ENCODE measurements at regions of chr9 and their contacts with region 1.

Region 1: DNA sequence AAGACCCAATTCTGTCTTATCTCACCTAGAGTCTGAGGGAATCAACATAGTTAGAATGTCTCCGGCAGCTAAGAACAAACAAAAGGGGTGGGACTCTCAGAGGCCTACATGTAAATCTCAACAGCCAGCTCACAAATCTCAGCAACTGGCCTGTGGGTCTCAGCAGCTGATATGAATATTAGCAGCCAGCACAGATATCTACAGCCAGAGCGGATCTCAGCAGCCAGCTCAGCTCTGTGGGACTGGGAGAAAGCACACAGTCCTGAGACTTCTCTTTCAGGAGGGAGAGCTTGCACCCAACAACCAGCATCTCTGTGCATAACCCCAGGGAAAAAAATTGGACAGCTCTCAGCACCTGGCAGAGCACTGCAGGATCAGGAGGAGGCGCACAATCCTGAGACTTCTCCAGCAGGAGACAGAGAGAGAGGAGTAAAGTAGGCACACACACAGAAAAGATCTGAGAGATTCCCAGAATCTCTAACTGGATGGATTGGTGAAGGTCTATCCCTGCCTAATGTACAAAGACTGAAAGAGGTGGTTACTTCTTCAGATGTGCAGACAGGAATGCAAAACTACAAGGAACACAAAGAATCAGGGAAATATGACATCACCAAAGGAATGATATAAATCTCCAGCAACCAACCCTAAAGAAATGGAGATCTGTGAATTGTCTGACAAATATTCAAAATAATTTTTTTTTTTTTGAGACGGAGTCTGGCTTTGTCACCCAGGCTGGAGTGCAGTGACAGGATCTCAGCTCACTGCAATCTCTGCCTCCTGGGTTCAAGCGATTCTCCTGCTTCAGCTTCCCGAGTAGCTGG is 29.2 kb downstream of the KLF4 start:
- DNase-seq: peak; percentile 79 to 83
- H3K4me3 ChIP-seq: no peak overlapping the region
- H3K4me3 Mint-ChIP-seq: peak overlapping the region; percentile 12
- H3K27ac Mint-ChIP-seq: peak overlapping the region; percentile 70
- H3K4me1 ChIP-seq: peaks cover 30% of the 10 kb centered on the region
- H3K4me1 Mint-ChIP-seq: peaks cover 18% of the 10 kb centered on the region
- H3K27me3 ChIP-seq: no peaks in the 10 kb centered on the region
- H3K27me3 Mint-ChIP-seq: no peaks in the 10 kb centered on the region
- CTCF ChIP-seq: no peak

Region 2: GRCh38 chr9:107282753-107283625 is 177.4 kb before region 1 on chr9 and contains the start of gene RAD23B:
- CTCF ChIA-PET with region 1: no interaction called
- POLR2A ChIA-PET with region 1: interaction called, 10 read pairs
- intact Hi-C with region 1: no loop called
- DNase-seq: peak; percentile 99
- H3K4me3 ChIP-seq: peak within 1 kb of the TSS; percentile 78
- H3K4me3 Mint-ChIP-seq: peak within 1 kb of the TSS; percentile 93
- H3K27ac Mint-ChIP-seq: peak within 1 kb of the TSS; percentile 92
- H3K4me1 ChIP-seq: peaks cover 37% of the 10 kb centered on the region
- H3K4me1 Mint-ChIP-seq: peaks cover 27% of the 10 kb centered on the region
- H3K27me3 ChIP-seq: no peaks in the 10 kb centered on the region
- H3K27me3 Mint-ChIP-seq: no peaks in the 10 kb centered on the region
- CTCF ChIP-seq: peak in 1 of 2 experiments; percentile 1
- total RNA-seq, gene RAD23B: 188 TPM in 2 replicates

Region 3: DNA sequence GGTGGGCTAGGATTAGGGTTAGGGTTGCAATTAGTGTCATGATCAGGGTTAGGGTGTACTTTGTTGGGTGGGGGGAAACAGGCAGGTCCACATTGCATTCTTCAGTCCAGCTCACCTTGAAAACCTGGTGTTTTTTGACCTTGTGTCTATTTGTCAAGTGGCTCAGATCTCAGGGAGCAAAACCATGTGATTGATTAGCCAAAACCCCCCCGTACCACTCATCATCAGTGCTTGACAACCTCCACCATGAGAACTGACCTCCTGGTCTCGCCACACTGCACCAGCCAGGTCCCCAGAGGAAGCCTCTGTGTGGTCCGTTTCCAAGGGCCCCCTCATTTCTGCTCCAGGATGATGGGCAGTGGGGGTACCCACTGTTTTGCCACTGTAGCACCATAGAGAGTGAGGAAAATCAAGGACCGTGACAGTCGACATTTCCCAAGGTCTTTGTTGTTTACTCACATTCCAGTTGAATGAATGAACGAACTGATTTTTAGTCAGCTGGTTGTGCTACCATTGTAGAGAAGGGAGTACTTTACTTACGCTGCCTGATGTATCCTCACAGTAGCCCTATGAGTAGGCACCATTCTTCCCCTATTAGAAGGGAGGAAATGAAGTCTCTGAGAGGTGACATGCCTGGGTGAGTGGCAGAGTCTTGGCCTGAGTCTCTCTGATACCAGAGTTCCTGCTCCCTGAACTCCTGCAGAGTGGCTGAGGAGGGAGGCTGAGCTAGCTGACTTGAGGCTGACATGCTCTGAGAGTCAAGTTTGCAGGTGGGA is 92.5 kb before region 1 on chr9:
- CTCF ChIA-PET with region 1: no interaction called
- POLR2A ChIA-PET with region 1: no interaction called
- intact Hi-C with region 1: loop called (anchors 1 kb)
- DNase-seq: peak; percentile 33 to 59
- H3K4me3 ChIP-seq: no peak overlapping the region
- H3K4me3 Mint-ChIP-seq: peak overlapping the region; percentile 63
- H3K27ac Mint-ChIP-seq: peak overlapping the region; percentile 88
- H3K4me1 ChIP-seq: peaks cover 26% of the 10 kb centered on the region
- H3K4me1 Mint-ChIP-seq: peaks cover 24% of the 10 kb centered on the region
- H3K27me3 ChIP-seq: no peaks in the 10 kb centered on the region
- H3K27me3 Mint-ChIP-seq: no peaks in the 10 kb centered on the region
- CTCF ChIP-seq: no peak

Region 4: DNA sequence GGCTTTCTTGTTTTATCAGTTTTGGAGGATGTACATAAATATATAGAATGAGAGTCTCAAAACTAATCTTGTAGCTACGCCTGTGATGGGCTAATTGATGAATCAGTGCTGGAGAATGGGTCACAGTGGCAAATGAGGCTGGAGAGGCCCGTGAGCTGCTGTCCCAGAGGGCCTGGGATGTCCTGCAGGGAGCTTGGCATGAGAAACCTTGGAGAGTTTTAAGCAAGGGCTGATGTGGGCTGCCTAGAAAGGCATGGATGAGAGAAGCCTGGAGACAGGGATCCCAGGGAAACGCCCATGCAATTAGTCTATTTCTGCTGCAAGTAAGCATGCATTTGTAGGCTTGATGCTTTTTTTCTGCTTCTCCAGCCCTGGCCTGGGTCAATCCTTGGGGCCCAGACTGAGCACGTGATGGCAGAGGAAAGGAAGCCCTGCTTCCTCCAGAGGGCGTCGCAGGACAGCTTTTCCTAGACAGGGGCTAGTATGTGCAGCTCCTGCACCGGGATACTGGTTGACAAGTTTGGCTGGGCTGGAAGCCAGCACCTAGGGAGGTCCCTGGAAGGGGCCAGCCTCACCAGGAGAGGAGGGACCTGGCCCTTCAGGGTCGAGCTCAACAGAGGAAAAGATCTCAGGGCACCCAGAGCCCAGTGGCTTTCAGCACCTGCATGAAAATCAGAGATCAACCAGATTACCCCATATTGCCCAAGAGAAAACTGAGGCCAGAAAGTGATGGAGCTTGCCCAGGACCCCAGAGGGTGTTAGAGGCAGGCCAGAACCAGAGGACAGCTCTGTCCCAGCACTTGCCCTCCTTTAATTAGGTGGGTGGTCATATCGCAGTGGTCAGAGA is 38.2 kb before region 1 on chr9:
- CTCF ChIA-PET with region 1: no interaction called
- POLR2A ChIA-PET with region 1: no interaction called
- intact Hi-C with region 1: loop called (anchors 1 kb)
- DNase-seq: peak; percentile 84 to 87
- H3K4me3 ChIP-seq: no peak overlapping the region
- H3K4me3 Mint-ChIP-seq: no peak overlapping the region
- H3K27ac Mint-ChIP-seq: no peak overlapping the region
- H3K4me1 ChIP-seq: no peaks in the 10 kb centered on the region
- H3K4me1 Mint-ChIP-seq: no peaks in the 10 kb centered on the region
- H3K27me3 ChIP-seq: no peaks in the 10 kb centered on the region
- H3K27me3 Mint-ChIP-seq: no peaks in the 10 kb centered on the region
- CTCF ChIP-seq: peak; percentile 80 to 87

Region 5: DNA sequence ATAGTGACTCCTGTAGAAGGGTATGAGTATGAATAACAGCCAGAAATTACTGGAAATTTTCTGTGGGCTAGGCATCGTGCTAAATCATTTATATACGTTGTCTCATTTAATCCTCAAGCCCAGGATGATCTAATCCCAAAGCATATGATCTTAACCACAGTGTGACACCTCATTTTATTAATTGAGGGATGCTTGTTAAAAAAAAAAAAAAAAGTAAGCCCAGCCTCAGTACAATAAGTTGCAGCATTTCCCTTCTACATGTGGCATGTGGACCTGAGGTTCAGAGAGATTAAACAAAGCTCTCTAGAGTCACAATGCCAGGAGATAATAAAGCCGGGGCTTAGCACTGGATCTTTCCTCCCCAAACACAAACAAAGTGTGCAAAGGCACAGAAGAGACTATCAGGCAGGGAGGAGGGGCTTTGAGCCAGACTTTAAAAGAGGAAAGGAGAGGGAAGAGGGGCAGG is 20.4 kb before region 1 on chr9:
- CTCF ChIA-PET with region 1: no interaction called
- POLR2A ChIA-PET with region 1: no interaction called
- intact Hi-C with region 1: loop called (anchors 1 kb)
- DNase-seq: peak in 1 of 2 experiments; percentile 53
- H3K4me3 ChIP-seq: no peak overlapping the region
- H3K4me3 Mint-ChIP-seq: no peak overlapping the region
- H3K27ac Mint-ChIP-seq: peak overlapping the region; percentile 8
- H3K4me1 ChIP-seq: peaks cover 6% of the 10 kb centered on the region; the same call in 1 of the 2 replicates
- H3K4me1 Mint-ChIP-seq: peaks cover 7% of the 10 kb centered on the region
- H3K27me3 ChIP-seq: no peaks in the 10 kb centered on the region
- H3K27me3 Mint-ChIP-seq: no peaks in the 10 kb centered on the region
- CTCF ChIP-seq: no peak